WTC11 (cell line): ENCODE measurements at regions of chr5 and their contacts with region 1.

Region 1: GRCh38 chr5:137320056-137321045 is 178.8 kb downstream of the SPOCK1 start:
- DNase-seq: peak; percentile 36
- ATAC-seq: peak; percentile 95
- H3K4me3 Mint-ChIP-seq: no peak overlapping the region
- H3K27ac Mint-ChIP-seq: peak overlapping the region; percentile 79
- H3K4me1 Mint-ChIP-seq: peaks cover 12% of the 10 kb centered on the region; the same call in 1 of the 2 replicates
- H3K27me3 Mint-ChIP-seq: no peaks in the 10 kb centered on the region
- CTCF ChIP-seq: peak; percentile 77

Region 2: DNA sequence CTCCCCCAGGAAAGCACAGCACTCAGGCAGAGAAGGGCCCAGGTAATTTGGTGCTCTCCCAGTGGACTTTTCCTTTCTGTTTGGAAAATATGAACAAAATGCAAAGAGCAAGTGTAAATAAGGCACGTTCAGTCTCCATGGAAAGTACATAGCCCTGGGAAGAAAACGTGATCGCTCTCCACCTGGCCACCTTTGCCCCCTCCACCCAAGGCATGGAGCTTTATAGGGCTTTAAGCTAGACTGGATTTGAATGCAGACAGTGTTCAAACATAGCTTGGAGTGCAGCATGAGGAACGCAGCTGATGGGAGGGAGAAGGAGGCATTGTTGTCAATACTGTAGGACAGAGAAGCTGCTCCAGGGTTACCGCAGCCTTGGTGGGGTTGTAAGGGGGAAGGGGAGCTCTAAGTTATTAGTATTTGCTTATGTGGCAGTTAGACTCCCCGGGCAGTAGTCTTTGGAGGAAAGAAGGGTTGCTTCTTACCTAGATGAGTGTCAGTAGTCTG is 321.4 kb before region 1 on chr5:
- CTCF ChIA-PET with region 1: no interaction called
- POLR2A ChIA-PET with region 1: no interaction called
- DNase-seq: no peak
- ATAC-seq: no peak
- H3K4me3 Mint-ChIP-seq: no peak overlapping the region
- H3K27ac Mint-ChIP-seq: no peak overlapping the region
- H3K4me1 Mint-ChIP-seq: no peaks in the 10 kb centered on the region
- H3K27me3 Mint-ChIP-seq: peaks cover 2% of the 10 kb centered on the region
- CTCF ChIP-seq: no peak

Region 3: GRCh38 chr5:137075163-137075970 is 245.0 kb before region 1 on chr5:
- CTCF ChIA-PET with region 1: interaction called, 27 read pairs
- POLR2A ChIA-PET with region 1: no interaction called
- DNase-seq: peak; percentile 94
- ATAC-seq: peak; percentile 100
- H3K4me3 Mint-ChIP-seq: no peak overlapping the region
- H3K27ac Mint-ChIP-seq: peak overlapping the region; percentile 13; the same call in 1 of the 2 replicates
- H3K4me1 Mint-ChIP-seq: peaks cover 24% of the 10 kb centered on the region
- H3K27me3 Mint-ChIP-seq: no peaks in the 10 kb centered on the region
- CTCF ChIP-seq: peak; percentile 68

Region 4: GRCh38 chr5:137209232-137209809 is 111.0 kb before region 1 on chr5:
- CTCF ChIA-PET with region 1: no interaction called
- POLR2A ChIA-PET with region 1: no interaction called
- DNase-seq: no peak
- ATAC-seq: no peak
- H3K4me3 Mint-ChIP-seq: no peak overlapping the region
- H3K27ac Mint-ChIP-seq: no peak overlapping the region
- H3K4me1 Mint-ChIP-seq: peaks cover 18% of the 10 kb centered on the region
- H3K27me3 Mint-ChIP-seq: peaks cover 3% of the 10 kb centered on the region; the same call in 1 of the 2 replicates
- CTCF ChIP-seq: no peak

Region 5: DNA sequence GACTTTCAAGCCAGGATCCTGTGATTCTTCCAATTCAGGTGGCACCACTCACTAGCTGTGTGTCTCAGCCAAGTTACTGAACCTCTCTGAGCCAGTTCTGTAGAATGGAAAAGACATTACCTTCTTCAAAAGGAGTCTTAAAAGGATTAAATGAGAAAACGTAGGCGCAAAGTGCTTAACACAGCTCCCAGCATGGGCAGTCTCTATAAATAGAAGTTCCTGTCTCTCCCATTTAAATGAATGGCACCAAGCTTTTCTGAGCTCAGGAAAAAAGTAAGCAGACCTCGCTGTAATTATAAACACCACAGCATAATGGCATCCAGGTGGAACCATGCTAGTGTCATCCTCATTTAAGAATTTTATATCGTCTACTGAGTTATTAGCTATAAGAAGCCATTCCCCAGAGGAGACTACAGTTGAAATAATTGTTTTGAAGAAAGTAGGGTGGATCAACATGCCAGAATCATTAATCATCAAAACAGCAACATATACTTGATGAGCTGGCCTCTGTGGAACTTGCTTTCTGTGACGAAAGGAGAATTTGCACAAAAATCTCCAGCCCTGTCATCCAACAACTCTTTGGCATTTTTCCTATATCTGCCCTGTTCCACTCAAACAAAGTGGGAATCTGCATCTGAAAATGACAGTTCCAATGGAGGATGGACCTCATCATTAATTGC is 10.2 kb before region 1 on chr5:
- CTCF ChIA-PET with region 1: interaction called, 58 read pairs
- POLR2A ChIA-PET with region 1: no interaction called
- DNase-seq: no peak
- ATAC-seq: no peak
- H3K4me3 Mint-ChIP-seq: no peak overlapping the region
- H3K27ac Mint-ChIP-seq: no peak overlapping the region
- H3K4me1 Mint-ChIP-seq: peaks cover 32% of the 10 kb centered on the region
- H3K27me3 Mint-ChIP-seq: no peaks in the 10 kb centered on the region
- CTCF ChIP-seq: no peak

Region 6: GRCh38 chr5:137336565-137337120 is 16.3 kb after region 1 on chr5:
- CTCF ChIA-PET with region 1: interaction called, 18 read pairs
- POLR2A ChIA-PET with region 1: interaction called, 3 read pairs
- DNase-seq: no peak
- ATAC-seq: no peak
- H3K4me3 Mint-ChIP-seq: no peak overlapping the region
- H3K27ac Mint-ChIP-seq: no peak overlapping the region
- H3K4me1 Mint-ChIP-seq: peaks cover 7% of the 10 kb centered on the region
- H3K27me3 Mint-ChIP-seq: no peaks in the 10 kb centered on the region
- CTCF ChIP-seq: no peak

Region 7: DNA sequence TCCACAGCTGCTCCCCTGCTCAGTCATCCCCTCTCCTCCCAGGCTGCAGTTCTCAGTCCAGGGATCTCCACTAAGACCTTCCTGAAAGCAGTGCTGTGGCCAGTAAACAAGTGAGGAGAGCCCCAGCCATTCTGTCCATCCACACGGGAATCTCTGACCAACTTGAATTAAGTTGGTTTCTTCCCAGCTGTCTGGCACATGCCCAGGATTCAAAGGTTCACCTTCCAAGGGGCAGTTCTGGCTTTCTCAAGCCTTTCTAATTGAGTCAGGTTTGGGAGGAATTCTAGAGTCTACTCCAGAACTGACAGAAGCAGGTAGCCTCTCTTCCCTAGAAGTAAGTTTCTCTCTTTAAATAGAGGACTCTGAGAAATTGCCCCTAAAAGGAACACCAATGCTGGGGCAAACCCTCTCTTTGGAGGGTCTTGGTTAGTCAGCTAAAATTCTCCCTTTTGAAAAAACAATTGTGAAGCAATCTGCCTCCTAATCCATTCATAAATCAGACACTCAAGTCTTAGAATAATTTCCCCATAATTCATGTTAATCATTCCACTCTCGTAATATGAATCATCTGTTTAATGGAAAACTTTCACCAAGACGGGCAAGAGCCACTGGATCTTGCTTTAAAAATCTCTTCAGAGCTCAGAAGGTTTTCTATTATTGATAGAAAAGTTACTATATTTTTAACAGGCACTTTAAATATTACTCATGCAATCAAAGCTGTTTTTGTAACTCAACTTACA is 44.9 kb after region 1 on chr5:
- CTCF ChIA-PET with region 1: interaction called, 12 read pairs
- POLR2A ChIA-PET with region 1: no interaction called
- DNase-seq: no peak
- ATAC-seq: no peak
- H3K4me3 Mint-ChIP-seq: no peak overlapping the region
- H3K27ac Mint-ChIP-seq: no peak overlapping the region
- H3K4me1 Mint-ChIP-seq: no peaks in the 10 kb centered on the region
- H3K27me3 Mint-ChIP-seq: no peaks in the 10 kb centered on the region; the same call in 1 of the 2 replicates
- CTCF ChIP-seq: no peak

Region 8: DNA sequence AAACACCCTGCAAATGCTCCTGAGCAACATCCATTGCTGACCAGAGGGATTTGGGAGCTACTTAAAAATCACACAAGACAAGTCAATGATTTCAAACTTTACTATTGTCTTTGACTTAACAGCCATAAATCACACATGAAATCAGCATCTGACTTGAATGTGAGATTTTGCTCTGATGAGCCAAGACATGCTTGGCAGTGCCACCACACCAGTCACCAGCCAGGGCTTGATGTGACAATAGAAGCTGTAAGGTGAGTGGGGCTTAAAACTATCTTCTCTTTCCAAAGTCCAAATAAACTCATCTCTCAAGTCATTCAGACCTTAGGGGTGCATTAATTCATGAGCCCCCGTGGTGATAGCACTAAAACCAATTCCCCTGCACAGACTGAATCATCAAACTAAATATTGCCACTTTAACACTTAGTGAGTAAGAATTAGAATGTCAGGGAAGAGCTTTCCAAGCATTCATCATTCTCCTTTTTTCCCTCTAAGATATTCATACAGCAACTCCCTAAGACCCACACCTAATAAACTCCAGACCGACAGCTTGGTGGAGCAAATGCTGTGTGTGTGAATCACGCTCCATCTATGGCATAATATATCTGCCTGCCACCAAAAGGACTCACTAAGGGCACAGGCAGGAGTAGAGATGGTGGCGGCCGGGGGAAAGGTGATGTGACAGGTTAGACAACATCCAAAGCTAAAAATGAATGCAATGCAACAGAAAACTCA is 59.4 kb after region 1 on chr5:
- CTCF ChIA-PET with region 1: no interaction called
- POLR2A ChIA-PET with region 1: no interaction called
- DNase-seq: no peak
- ATAC-seq: no peak
- H3K4me3 Mint-ChIP-seq: no peak overlapping the region
- H3K27ac Mint-ChIP-seq: no peak overlapping the region
- H3K4me1 Mint-ChIP-seq: peaks cover 15% of the 10 kb centered on the region
- H3K27me3 Mint-ChIP-seq: peaks cover 12% of the 10 kb centered on the region
- CTCF ChIP-seq: no peak

Region 9: GRCh38 chr5:137498736-137499505 is 178.6 kb after region 1 on chr5 and contains the start of gene SPOCK1:
- CTCF ChIA-PET with region 1: interaction called, 79 read pairs
- POLR2A ChIA-PET with region 1: interaction called, 3 read pairs
- DNase-seq: peak; percentile 78
- ATAC-seq: peak; percentile 86
- H3K4me3 Mint-ChIP-seq: peak within 1 kb of the TSS; percentile 70
- H3K27ac Mint-ChIP-seq: no peak within 1 kb of the TSS
- H3K4me1 Mint-ChIP-seq: 0 out of 2 replicates have a peak, but pooled peaks cover 2% of the 10 kb centered on the region
- H3K27me3 Mint-ChIP-seq: peaks cover 36% of the 10 kb centered on the region
- CTCF ChIP-seq: peak; percentile 84
- total RNA-seq, gene SPOCK1: 13.2 to 15.8 TPM (median 15.2 TPM) in 3 replicates

Region 10: DNA sequence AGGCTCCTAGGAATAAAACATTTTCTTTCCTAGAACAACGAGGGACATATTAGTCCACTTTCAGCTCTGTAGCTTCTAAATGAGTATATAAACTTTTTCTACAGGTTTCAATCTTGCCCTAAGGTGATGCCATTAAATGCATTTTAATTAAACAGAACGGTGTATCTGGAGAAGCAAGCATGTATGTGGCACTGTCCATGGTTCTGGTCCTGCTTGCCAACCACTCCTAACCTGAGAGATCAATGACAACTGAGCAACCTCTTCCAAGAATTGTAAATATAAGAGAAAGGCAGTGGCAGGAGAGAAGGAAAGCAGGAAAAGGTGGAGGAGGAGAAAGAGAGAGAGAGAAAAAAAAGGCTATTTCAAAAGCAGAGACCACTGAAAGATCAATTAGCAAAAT is 274.4 kb after region 1 on chr5:
- CTCF ChIA-PET with region 1: no interaction called
- POLR2A ChIA-PET with region 1: no interaction called
- DNase-seq: no peak
- ATAC-seq: no peak
- H3K4me3 Mint-ChIP-seq: no peak overlapping the region
- H3K27ac Mint-ChIP-seq: no peak overlapping the region
- H3K4me1 Mint-ChIP-seq: no peaks in the 10 kb centered on the region
- H3K27me3 Mint-ChIP-seq: peaks cover 6% of the 10 kb centered on the region
- CTCF ChIP-seq: no peak

Region 11: GRCh38 chr5:137605411-137605810 is 285.1 kb after region 1 on chr5:
- CTCF ChIA-PET with region 1: interaction called, 21 read pairs
- POLR2A ChIA-PET with region 1: no interaction called
- DNase-seq: no peak
- ATAC-seq: peak; percentile 36; the same call in 1 of the 2 replicates
- H3K4me3 Mint-ChIP-seq: no peak overlapping the region
- H3K27ac Mint-ChIP-seq: no peak overlapping the region
- H3K4me1 Mint-ChIP-seq: peaks cover 7% of the 10 kb centered on the region
- H3K27me3 Mint-ChIP-seq: no peaks in the 10 kb centered on the region; the same call in 1 of the 2 replicates
- CTCF ChIP-seq: no peak